ENCODE measurements at regions of chr10 and their contacts with region 1.

Region 1: DNA sequence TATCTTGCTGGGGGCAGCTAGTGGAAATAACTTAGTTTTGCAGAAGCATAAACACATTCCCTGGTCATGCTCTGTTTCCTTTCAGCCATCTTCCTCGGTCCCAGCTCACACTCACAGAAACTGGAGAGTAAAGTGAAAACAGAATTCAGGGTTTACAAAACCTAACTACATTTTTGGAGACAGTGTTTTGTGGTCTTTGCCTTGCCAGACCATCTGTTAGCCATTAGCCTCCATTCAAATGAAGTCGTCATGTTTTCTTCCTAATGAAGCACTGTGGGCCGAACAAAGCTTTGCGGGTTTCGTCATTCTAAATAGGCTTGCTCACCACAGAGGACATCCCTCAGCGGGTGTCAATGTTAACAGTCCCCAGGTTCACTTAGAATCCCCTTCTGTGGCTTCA is 214.6 kb upstream of the TMEM72 start:
- DNase-seq: no peak

Region 2: GRCh38 chr10:44673245-44673983 is 23.1 kb before region 1 on chr10:
- intact Hi-C with region 1: loop called in 1 of 2 experiments (anchors 1 kb)
- DNase-seq: no peak